ENCODE measurements at regions of chr1 and their contacts with region 1.

Region 1: GRCh38 chr1:72734415-72734814 is 452.1 kb upstream of the NEGR1 start:
- DNase-seq: no peak
- H3K4me3 ChIP-seq: no peak overlapping the region
- H3K27ac ChIP-seq: no peak overlapping the region
- H3K4me1 ChIP-seq: no peaks in the 10 kb centered on the region
- H3K27me3 ChIP-seq: no peaks in the 10 kb centered on the region
- CTCF ChIP-seq: no peak

Region 2: DNA sequence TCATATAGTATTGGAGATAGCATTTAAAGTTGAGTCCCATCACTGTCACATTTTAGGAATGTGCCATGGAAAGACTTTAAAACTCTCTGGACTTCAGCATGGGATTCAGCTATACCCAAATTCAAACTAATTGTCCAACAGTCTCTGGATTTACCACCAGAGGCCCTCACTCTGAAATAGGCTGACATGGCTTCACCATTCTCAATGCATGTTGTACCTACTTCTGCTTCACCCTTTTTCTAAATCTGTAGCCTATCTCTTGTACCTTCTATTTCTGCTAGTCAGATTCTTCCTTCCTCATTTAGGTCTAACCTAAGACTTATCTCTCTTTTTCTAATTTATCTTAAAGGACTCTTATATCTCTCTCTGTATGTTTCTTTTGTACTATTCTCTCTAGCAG is 1140.9 kb before region 1 on chr1:
- CTCF ChIA-PET with region 1: no interaction called
- POLR2A ChIA-PET with region 1: no interaction called
- intact Hi-C with region 1: no loop called
- DNase-seq: no peak
- H3K4me3 ChIP-seq: no peak overlapping the region
- H3K27ac ChIP-seq: no peak overlapping the region
- H3K4me1 ChIP-seq: no peaks in the 10 kb centered on the region
- H3K27me3 ChIP-seq: no peaks in the 10 kb centered on the region
- CTCF ChIP-seq: no peak

Region 3: GRCh38 chr1:72075425-72075824 is 659.0 kb before region 1 on chr1:
- CTCF ChIA-PET with region 1: no interaction called
- POLR2A ChIA-PET with region 1: no interaction called
- intact Hi-C with region 1: loop called (anchors 10 kb)
- DNase-seq: no peak
- H3K4me3 ChIP-seq: no peak overlapping the region
- H3K27ac ChIP-seq: no peak overlapping the region
- H3K4me1 ChIP-seq: no peaks in the 10 kb centered on the region
- H3K27me3 ChIP-seq: no peaks in the 10 kb centered on the region
- CTCF ChIP-seq: no peak

Measured in PC-9 (cell line).